K562 (cell line): ENCODE measurements at regions of chrX and their contacts with region 1.

Region 1: GRCh38 chrX:57583477-57583876 is 8.3 kb upstream of the ZXDB start:
- DNase-seq: peak in 1 of 4 experiments; percentile 6
- ATAC-seq: no peak
- H3K4me3 ChIP-seq: no peak overlapping the region
- H3K27ac ChIP-seq: no peak overlapping the region
- H3K4me1 ChIP-seq: no peaks in the 10 kb centered on the region
- H3K27me3 ChIP-seq: no peaks in the 10 kb centered on the region
- CTCF ChIP-seq: no peak
- EP300 ChIP-seq: no peak
- POLR2A ChIP-seq: no peak
- RAD21 ChIP-seq: no peak

Region 2: GRCh38 chrX:57918750-57919436 is 335.4 kb after region 1 on chrX:
- CTCF ChIA-PET with region 1: no interaction called
- POLR2A ChIA-PET with region 1: no interaction called
- in situ Hi-C with region 1: no loop called
- intact Hi-C with region 1: loop called (anchors 5 kb)
- DNase-seq: peak in 1 of 4 experiments; percentile 22
- ATAC-seq: peak; percentile 69
- H3K4me3 ChIP-seq: no peak overlapping the region
- H3K27ac ChIP-seq: no peak overlapping the region
- H3K4me1 ChIP-seq: no peaks in the 10 kb centered on the region
- H3K27me3 ChIP-seq: no peaks in the 10 kb centered on the region
- CTCF ChIP-seq: peak in 2 of 3 experiments; percentile 25 to 40; a peak in 2 of 6 replicates
- EP300 ChIP-seq: no peak
- POLR2A ChIP-seq: no peak
- RAD21 ChIP-seq: no peak